HCT116 (cell line): ENCODE measurements at regions of chr10 and their contacts with region 1.

Region 1: GRCh38 chr10:100433253-100434240 is 29.3 kb upstream of the WNT8B start:
- DNase-seq: peak; percentile 97
- ATAC-seq: peak; percentile 96
- H3K4me3 ChIP-seq: no peak overlapping the region
- H3K27ac ChIP-seq: no peak overlapping the region
- H3K4me1 ChIP-seq: peaks cover 0 to 9% of the 10 kb centered on the region in 2 experiments; a peak in 2 of 4 replicates
- H3K27me3 ChIP-seq: no peaks in the 10 kb centered on the region
- CTCF ChIP-seq: peak; percentile 100
- POLR2A ChIP-seq: no peak
- RAD21 ChIP-seq: peak; percentile 100

Region 2: DNA sequence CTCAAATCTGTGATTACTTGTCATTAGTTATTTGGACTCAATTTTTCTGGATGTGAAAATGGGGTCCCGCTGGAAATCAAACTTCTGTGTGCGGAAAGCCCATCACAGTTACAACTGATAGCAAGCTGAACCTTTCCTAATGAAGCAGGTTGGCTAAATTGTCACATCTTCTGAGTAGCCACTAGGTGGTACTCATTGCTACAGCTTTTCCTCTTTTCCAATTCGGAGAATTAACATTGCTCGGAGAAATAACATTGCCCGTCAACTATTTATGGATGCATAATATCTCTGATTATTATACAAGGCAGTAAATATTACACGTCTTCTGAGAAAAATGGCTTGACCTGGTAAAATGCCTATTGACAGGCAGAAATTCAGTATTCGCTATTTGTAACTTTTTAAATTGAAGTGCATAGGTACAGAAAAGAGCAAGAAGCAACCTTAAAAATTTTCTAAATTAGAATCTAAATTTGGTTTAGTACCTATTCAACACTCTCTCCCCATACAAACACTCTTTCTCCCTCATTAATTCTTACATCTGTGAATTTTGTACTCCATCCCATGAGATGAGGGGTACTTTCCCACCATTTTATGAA is 129.7 kb before region 1 on chr10:
- CTCF ChIA-PET with region 1: no interaction called
- POLR2A ChIA-PET with region 1: no interaction called
- RAD21 ChIA-PET with region 1: interaction called in 1 of 2 experiments, 3 read pairs
- intact Hi-C with region 1: loop called (anchors 1 kb)
- DNase-seq: peak; percentile 32
- ATAC-seq: peak; percentile 87
- H3K4me3 ChIP-seq: no peak overlapping the region
- H3K27ac ChIP-seq: no peak overlapping the region
- H3K4me1 ChIP-seq: peaks cover 4 to 7% of the 10 kb centered on the region in 2 experiments; a peak in 2 of 4 replicates
- H3K27me3 ChIP-seq: no peaks in the 10 kb centered on the region; the same call in 1 of the 2 replicates
- CTCF ChIP-seq: peak; percentile 84 to 91 (median 87); a peak in 5 of 6 replicates
- POLR2A ChIP-seq: no peak
- RAD21 ChIP-seq: peak; percentile 89